ENCODE measurements at regions of chr2 and their contacts with region 1.

Region 1: DNA sequence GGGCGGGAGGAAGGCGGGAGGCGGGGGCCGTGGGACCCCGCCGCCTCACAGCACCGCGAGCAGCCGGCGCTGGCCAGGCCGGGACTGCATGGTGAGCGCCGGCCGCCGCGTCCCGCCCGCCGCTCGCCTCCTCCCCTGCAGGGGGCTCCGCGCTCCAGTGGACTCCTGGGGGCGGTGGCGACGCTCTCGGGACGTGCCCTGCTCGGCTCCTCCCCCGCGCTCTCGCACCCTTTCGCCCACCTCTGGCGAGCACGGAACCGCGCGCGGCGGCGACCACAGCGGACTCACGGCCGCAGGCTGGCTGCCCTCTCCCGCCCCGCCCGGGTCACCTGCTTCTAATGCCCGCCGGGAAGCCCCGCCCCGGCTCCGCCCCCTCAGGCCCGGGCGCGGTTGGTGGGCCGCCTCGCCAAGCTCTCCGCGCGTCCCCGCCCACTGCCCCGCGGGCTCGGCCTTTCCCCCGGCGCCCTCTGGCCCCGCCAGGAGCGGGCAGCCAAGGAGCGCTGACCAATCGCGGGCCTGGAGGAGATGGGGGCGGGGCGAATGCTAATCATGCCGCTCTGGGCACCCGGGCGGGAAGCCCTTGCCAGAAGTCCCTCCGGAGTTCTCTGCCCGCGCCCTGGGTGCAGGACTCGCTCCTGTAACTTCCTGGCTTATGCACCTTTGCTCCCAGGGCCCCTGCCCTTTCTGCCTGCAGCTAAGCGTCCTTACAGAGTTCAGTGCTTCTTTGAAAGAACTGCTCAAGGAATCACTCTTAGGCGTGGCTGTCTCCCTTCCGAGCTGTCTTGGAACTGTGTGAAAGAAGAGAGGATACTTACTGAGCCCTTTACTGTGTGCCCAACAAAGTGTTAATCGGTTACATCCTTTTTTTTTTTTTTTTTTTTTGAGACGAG is at the start of gene FZD5:
- DNase-seq: peak; percentile 99
- ATAC-seq: peak; percentile 82
- H3K4me3 Mint-ChIP-seq: peak within 1 kb of the TSS; percentile 94
- H3K27ac Mint-ChIP-seq: peak within 1 kb of the TSS; percentile 98
- H3K4me1 Mint-ChIP-seq: peaks cover 63% of the 10 kb centered on the region
- H3K27me3 Mint-ChIP-seq: no peaks in the 10 kb centered on the region
- CTCF ChIP-seq: no peak
- total RNA-seq, gene FZD5: 52.8 to 103 TPM (median 53.7 TPM) in 3 replicates

Region 2: DNA sequence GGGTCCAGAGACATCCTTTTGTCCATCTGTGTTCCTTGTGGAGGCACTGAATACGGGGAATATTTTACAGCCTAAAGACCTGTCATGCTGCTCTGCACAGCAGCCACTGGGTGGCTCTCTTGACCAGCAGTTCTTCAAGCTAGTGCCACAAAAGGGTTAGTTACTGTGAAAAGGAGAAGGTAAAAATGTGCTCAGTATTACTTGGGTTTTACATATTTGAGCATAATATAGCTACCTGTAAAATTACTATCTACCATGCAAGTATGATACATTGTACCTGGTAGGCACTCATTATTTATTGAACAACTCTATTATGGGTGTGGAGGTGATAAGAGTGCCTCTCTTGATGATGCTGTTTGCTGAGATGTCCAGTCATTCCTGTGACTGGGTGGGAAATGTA is 23.7 kb before region 1 on chr2:
- CTCF ChIA-PET with region 1: interaction called, 15 read pairs
- POLR2A ChIA-PET with region 1: interaction called, 5 read pairs
- DNase-seq: peak; percentile 55
- ATAC-seq: peak; percentile 82
- H3K4me3 Mint-ChIP-seq: no peak overlapping the region
- H3K27ac Mint-ChIP-seq: peak overlapping the region; percentile 31; the same call in 1 of the 2 replicates
- H3K4me1 Mint-ChIP-seq: peaks cover 16% of the 10 kb centered on the region
- H3K27me3 Mint-ChIP-seq: no peaks in the 10 kb centered on the region
- CTCF ChIP-seq: peak; percentile 83

Region 3: GRCh38 chr2:207796585-207797350 is 26.9 kb after region 1 on chr2:
- CTCF ChIA-PET with region 1: interaction called, 10 read pairs
- POLR2A ChIA-PET with region 1: no interaction called
- DNase-seq: peak; percentile 53
- ATAC-seq: peak; percentile 89
- H3K4me3 Mint-ChIP-seq: no peak overlapping the region
- H3K27ac Mint-ChIP-seq: peak overlapping the region; percentile 98
- H3K4me1 Mint-ChIP-seq: peaks cover 37% of the 10 kb centered on the region
- H3K27me3 Mint-ChIP-seq: peaks cover 3% of the 10 kb centered on the region; the same call in 1 of the 2 replicates
- CTCF ChIP-seq: no peak

Region 4: DNA sequence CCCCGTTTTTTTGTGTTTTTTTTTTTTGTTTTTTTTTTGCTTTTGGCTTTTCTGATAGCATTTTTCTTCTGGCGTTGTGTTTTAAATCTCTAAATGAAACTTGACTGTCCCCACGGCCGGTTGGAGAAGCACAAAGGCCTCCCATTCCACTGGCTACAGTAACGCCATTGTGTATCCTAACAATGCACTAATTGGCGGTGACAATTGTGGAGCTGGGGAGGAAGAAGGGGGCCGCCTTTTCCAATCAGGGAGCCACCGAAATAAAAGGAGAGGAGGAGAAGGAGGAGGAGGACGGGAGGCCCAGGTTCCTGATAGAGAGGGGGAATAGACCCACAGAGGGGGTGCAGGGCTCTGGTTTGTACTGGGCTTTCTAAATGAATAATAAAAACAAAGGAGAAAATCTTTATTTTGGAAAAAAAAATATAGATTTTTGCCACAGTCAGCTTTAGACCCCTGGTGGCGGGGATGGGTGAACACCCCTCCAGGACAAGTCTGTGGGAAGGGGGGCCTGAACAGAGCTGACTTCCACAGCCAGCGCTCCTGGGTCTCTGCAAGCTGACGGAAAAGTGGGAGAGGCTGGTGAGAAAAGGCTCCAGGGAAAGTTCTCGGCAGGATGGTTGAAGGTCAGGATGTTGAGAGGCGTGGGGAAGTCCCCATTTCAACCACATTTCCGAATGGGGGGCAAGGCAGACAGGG is 43.5 kb after region 1 on chr2:
- CTCF ChIA-PET with region 1: interaction called, 50 read pairs
- POLR2A ChIA-PET with region 1: interaction called, 6 read pairs
- DNase-seq: peak; percentile 23
- ATAC-seq: peak; percentile 3; the same call in 1 of the 2 replicates
- H3K4me3 Mint-ChIP-seq: peak overlapping the region; percentile 42
- H3K27ac Mint-ChIP-seq: peak overlapping the region; percentile 93
- H3K4me1 Mint-ChIP-seq: peaks cover 62% of the 10 kb centered on the region
- H3K27me3 Mint-ChIP-seq: no peaks in the 10 kb centered on the region
- CTCF ChIP-seq: no peak

Region 5: GRCh38 chr2:207836521-207837133 is 66.8 kb after region 1 on chr2:
- CTCF ChIA-PET with region 1: no interaction called
- POLR2A ChIA-PET with region 1: no interaction called
- DNase-seq: no peak
- ATAC-seq: peak; percentile 73
- H3K4me3 Mint-ChIP-seq: no peak overlapping the region
- H3K27ac Mint-ChIP-seq: peak overlapping the region; percentile 54; the same call in 1 of the 2 replicates
- H3K4me1 Mint-ChIP-seq: peaks cover 31% of the 10 kb centered on the region
- H3K27me3 Mint-ChIP-seq: no peaks in the 10 kb centered on the region
- CTCF ChIP-seq: no peak

Region 6: GRCh38 chr2:207896525-207897295 is 126.9 kb after region 1 on chr2:
- CTCF ChIA-PET with region 1: interaction called, 16 read pairs
- POLR2A ChIA-PET with region 1: interaction called, 5 read pairs
- DNase-seq: peak; percentile 68
- ATAC-seq: peak; percentile 94
- H3K4me3 Mint-ChIP-seq: peak overlapping the region; percentile 19; the same call in 1 of the 2 replicates
- H3K27ac Mint-ChIP-seq: peak overlapping the region; percentile 94
- H3K4me1 Mint-ChIP-seq: peaks cover 57% of the 10 kb centered on the region
- H3K27me3 Mint-ChIP-seq: no peaks in the 10 kb centered on the region
- CTCF ChIP-seq: peak; percentile 40; the same call in 1 of the 2 replicates

Region 7: DNA sequence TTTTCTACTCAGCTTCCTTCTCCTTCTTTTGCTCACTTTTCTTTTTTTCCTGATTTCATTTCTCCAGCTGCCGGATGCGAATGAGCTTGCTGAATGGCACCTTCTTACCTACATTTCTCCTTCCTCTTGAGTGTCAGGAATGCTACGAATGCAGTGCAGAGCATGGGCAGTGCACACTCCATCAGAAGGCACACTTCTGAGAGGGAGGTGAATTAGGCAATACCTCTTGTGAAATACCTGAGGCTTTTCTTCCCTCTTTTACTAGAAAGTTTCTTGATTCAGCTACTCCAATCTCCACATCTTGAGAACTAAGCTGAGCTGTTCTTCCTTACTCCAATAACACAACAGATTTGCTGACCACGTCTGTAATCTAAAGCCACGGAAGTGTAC is 204.4 kb after region 1 on chr2:
- CTCF ChIA-PET with region 1: interaction called, 34 read pairs
- POLR2A ChIA-PET with region 1: interaction called, 5 read pairs
- DNase-seq: no peak
- ATAC-seq: no peak
- H3K4me3 Mint-ChIP-seq: no peak overlapping the region
- H3K27ac Mint-ChIP-seq: peak overlapping the region; percentile 66
- H3K4me1 Mint-ChIP-seq: peaks cover 42% of the 10 kb centered on the region
- H3K27me3 Mint-ChIP-seq: no peaks in the 10 kb centered on the region
- CTCF ChIP-seq: no peak

Region 8: DNA sequence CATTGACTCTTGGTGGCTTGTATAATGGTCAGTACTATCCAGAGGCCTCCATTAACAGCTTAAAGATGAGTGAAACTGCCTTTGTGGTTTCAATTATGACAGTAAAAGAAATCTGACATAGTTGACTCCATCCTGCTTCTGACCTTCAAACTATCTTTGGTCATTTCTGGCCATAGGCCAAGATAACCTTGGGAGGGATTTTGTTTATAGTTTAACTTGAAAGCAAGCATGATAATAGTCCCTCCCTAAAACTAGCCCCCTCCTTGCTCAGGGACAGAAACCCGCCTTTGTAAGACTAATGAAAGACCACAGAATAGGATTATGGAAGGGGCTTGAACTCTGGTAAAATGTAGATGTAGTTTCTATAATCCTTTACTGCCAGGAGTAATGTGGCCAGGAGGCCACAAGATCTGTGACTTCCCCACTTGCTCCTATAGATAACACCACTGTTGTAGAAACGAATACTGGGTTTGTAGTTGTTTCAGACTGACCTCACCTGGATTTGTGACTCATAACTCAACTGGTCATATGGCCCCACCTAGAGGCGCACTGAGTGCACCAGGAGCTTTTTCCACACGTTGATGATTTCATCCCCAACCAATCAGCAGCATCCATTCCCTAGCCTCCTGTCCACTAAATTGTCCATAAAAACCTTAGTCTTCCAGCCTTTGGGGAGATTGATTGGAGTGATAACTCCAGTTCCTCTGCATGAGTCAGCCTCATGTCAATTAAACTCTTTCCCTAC is 264.1 kb after region 1 on chr2:
- CTCF ChIA-PET with region 1: interaction called, 95 read pairs
- POLR2A ChIA-PET with region 1: no interaction called
- DNase-seq: peak; percentile 61
- ATAC-seq: peak; percentile 96
- H3K4me3 Mint-ChIP-seq: no peak overlapping the region
- H3K27ac Mint-ChIP-seq: peak overlapping the region; percentile 8; the same call in 1 of the 2 replicates
- H3K4me1 Mint-ChIP-seq: no peaks in the 10 kb centered on the region
- H3K27me3 Mint-ChIP-seq: no peaks in the 10 kb centered on the region
- CTCF ChIP-seq: no peak; the same call in 1 of the 2 replicates

Measured in WTC11 (cell line).